Cardiac septum (tissue), 1 donor: ENCODE measurements at regions of chr12 and their contacts with region 1.

Region 1: DNA sequence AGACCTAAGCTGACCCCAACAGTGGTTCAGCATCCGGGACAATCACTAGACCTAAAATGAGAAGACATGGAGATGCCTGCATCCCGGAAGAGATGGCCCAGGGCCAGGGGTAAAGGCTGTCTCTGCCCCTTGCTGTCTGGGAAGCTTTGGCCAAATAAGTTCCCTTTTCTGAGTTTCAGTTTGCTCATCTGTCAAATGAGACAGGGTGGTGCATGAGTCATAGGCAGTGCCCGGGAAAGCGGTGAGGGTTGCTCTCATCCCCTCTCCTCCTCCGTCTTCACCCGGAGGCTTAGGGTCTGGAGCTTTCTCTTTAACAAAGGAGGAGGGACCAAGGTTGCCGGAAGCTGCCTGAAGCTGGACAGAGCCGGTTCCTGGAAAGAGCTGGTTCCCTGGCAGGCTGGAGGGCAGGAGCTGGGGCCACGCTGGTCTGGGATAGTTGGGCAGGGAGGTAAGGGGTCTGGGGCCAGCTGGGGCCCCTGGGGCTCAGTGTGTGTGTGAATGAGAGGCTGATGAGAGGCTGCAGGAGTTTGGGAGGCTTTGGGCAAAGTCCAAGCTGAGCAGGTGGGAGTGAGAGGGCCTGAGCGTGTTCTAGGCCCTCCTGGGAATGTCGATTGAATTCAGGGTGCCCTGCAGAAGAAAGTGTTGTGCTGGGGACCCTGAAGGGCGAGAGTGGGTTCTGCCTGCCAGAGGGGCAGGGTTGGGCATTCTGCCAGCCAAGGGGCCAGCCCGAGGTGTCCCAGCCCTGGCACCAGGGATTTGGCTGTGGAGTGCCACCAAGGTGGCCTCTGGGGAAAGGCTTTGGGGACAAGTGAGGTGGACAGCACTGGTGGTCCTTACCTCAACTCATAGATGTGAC is at the start of gene SDSL:
- DNase-seq: peak; percentile 86
- total RNA-seq, gene SDSL: 11.5 TPM

Region 2: DNA sequence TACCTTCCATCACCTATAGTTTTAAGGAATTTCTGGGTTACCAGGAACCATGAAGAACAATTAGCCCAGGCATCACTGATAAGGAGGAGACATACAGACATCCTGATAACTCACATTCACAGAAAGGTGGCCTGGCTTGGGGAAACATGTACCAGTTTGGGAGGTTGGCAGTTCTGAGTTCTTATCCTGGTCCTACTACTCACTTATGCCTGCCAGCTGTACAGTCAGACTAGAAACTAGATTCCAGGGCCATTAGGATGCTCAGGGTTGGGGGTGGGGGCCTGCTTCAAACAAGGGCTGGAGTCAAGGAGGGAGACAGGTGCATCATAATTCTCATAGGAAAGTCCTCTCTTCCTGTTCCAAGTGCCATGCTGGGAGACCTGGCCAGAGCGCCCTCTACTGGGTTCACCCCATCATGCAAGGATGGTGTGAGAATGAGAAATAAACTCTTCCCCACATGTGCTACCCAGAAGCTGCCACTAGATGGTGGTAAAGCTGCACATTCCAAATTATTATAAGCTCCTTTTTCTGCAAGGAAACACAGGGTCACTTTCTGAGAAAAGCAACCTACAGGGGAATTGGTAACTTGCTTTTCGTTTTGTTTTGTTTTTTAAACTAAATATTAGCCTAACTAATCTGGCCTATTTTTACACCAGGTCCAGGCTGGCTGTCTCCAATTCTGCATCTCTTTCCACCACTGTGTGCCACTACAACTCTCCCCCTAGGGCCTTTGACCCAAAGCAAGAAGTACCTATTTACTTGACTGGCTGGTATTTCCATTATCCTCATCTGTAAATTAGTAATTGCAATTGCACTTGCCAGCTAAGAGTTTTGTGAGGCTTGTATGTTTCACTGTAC is 429.5 kb before region 1 on chr12:
- intact Hi-C with region 1: no loop called
- DNase-seq: no peak

Region 3: DNA sequence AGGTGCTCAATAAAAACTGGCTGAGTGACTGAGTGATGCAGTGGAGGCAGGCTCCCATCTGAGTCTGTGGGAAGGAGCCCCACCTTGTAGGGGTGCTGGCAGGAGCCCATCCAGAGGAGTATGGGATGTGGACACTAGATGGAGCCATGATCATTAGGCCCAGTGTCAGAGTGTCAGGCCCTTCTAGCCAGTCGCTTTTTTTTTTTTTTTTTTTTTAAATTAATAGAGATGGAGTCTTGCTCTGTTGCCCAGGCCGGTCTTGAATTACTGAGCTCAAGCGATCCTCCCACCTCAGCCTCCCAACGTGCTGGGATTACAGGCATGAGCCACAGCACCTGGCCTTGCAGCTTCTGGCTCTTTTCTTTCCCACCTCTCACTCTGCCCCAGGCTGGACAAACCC is 225.3 kb before region 1 on chr12:
- intact Hi-C with region 1: loop called (anchors 5 kb)
- DNase-seq: peak; percentile 79

Region 4: DNA sequence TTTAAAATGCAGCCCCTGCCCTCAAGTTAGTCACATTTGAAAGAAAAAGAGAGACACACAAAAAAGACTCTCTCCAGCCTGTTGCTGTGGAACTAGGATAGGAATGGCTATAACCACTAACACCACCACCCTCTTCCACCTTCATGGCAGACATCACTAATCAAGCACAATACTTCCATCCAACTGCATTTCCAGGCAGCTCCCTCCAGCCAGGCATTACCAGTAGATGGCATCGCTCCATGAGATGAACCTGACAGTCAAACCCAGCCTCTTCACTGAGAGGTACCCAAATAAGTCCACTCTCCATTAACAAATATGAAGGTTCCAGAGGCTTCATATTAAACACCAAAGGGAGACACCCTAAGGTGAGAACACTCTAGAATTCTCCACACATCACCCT is 111.8 kb before region 1 on chr12:
- intact Hi-C with region 1: loop called (anchors 1 kb)
- DNase-seq: no peak

Region 5: GRCh38 chr12:113358381-113359132 is 63.7 kb before region 1 on chr12 and contains the start of gene PLBD2:
- intact Hi-C with region 1: no loop called
- DNase-seq: peak; percentile 96
- total RNA-seq, gene PLBD2: 30.8 TPM